Prostate gland (tissue), 2 donors: ENCODE measurements at regions of chr4 and their contacts with region 1.

Region 1: DNA sequence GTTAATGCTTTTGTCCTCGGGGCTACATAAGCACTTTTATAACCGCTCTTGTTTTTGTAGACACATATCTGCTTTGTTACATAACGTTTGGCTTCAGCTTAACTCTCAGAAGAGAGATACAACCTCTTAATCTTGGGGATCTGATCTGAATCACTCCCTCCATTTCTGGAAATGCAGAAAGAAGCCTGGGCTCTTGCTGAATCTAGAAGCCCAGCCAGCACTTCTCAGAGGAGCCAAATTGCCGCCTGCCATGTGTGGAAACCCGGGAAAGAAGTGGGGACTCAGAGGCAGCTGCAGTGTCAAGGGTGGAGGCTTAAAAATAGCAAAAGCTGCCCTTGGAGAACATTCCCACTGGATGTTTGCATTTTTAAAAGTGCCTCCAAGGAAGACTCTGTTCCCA is 69.3 kb upstream of the LDB2 start:
- DNase-seq: no peak
- H3K4me3 ChIP-seq: no peak overlapping the region
- H3K27ac ChIP-seq: no peak overlapping the region
- H3K4me1 ChIP-seq: no peaks in the 10 kb centered on the region
- H3K27me3 ChIP-seq: no peaks in the 10 kb centered on the region
- CTCF ChIP-seq: no peak
- POLR2A ChIP-seq: no peak

Region 2: GRCh38 chr4:16464651-16465050 is 503.1 kb before region 1 on chr4:
- intact Hi-C with region 1: no loop called
- DNase-seq: no peak
- H3K4me3 ChIP-seq: no peak overlapping the region
- H3K27ac ChIP-seq: no peak overlapping the region
- H3K4me1 ChIP-seq: no peaks in the 10 kb centered on the region
- H3K27me3 ChIP-seq: no peaks in the 10 kb centered on the region
- CTCF ChIP-seq: no peak
- POLR2A ChIP-seq: no peak

Region 3: GRCh38 chr4:16893141-16893651 is 74.5 kb before region 1 on chr4:
- intact Hi-C with region 1: no loop called
- DNase-seq: no peak
- H3K4me3 ChIP-seq: no peak overlapping the region
- H3K27ac ChIP-seq: peak overlapping the region; percentile 16 to 43
- H3K4me1 ChIP-seq: no peaks in the 10 kb centered on the region
- H3K27me3 ChIP-seq: no peaks in the 10 kb centered on the region
- CTCF ChIP-seq: no peak
- POLR2A ChIP-seq: no peak

Region 4: DNA sequence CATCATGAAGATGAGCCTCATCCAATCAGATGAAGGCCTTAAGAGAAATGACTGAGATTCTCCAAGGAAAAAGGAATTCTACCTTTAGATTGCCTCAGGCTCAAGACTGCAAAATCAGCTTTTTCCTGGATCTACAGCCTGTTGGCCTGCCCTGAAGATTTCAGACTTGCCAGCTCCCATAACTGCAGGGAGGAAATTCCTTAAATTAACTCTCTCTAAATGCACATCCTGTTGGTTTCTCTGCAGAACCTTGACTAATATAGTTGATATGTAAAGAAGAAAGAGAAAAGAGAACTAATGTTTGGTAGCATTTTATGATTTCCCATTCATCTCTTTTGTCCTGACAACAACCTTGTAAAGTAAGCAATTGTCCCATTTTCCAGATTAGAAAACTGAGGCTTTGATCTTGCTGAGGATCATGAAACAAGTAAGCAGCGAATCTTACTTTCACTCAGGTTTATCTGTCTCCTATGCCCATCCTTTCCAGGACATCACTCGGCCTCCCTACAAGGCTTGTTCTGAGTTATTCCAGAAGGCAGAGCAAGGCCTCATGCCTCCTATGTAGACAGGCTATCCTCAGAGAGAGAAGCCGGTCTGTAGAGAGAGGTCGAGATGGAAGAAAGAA is 45.8 kb after region 1 on chr4:
- intact Hi-C with region 1: no loop called
- DNase-seq: no peak
- H3K4me3 ChIP-seq: no peak overlapping the region
- H3K27ac ChIP-seq: no peak overlapping the region
- H3K4me1 ChIP-seq: no peaks in the 10 kb centered on the region
- H3K27me3 ChIP-seq: no peaks in the 10 kb centered on the region
- CTCF ChIP-seq: no peak
- POLR2A ChIP-seq: no peak

Region 5: GRCh38 chr4:17066972-17067371 is 99.2 kb after region 1 on chr4:
- intact Hi-C with region 1: loop called (anchors 5 kb)
- DNase-seq: no peak
- H3K4me3 ChIP-seq: no peak overlapping the region
- H3K27ac ChIP-seq: no peak overlapping the region
- H3K4me1 ChIP-seq: no peaks in the 10 kb centered on the region
- H3K27me3 ChIP-seq: no peaks in the 10 kb centered on the region
- CTCF ChIP-seq: no peak
- POLR2A ChIP-seq: no peak